ENCODE measurements at regions of chr4 and their contacts with region 1.

Region 1: GRCh38 chr4:38179690-38180377 is 219.6 kb downstream of the PTTG2 start:
- DNase-seq: peak; percentile 49 to 81 (median 62)
- H3K4me3 ChIP-seq: no peak overlapping the region
- H3K4me3 Mint-ChIP-seq: no peak overlapping the region
- H3K27ac ChIP-seq: no peak overlapping the region
- H3K27ac Mint-ChIP-seq: no peak overlapping the region
- H3K4me1 ChIP-seq: peaks cover 22% of the 10 kb centered on the region
- H3K4me1 Mint-ChIP-seq: peaks cover 29 to 50% (median 46%) of the 10 kb centered on the region in 3 donors
- H3K27me3 ChIP-seq: no peaks in the 10 kb centered on the region
- H3K27me3 Mint-ChIP-seq: peaks cover 0 to 2% of the 10 kb centered on the region in 2 donors

Region 2: DNA sequence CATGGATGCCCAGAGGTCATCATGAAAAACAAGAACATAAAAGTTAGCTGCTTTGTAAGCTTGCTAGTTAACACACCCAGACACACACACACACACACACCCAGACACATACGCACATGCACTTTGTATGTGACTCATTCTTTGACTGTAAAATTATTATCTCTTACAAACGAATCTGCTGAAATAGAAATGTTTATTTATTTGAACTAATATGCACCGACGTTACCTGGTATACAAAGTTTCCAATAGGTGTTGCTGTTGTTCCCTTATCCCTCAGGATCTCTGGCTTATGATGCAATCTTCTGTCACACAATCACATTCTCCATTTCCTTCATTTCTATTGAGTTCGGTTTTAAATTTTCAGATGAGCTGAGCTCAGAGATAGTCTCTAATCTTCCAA is 10.3 kb before region 1 on chr4:
- CTCF ChIA-PET with region 1: interaction called, 13 read pairs
- POLR2A ChIA-PET with region 1: no interaction called
- DNase-seq: no peak
- H3K4me3 ChIP-seq: no peak overlapping the region
- H3K4me3 Mint-ChIP-seq: no peak overlapping the region
- H3K27ac ChIP-seq: no peak overlapping the region
- H3K27ac Mint-ChIP-seq: no peak overlapping the region
- H3K4me1 ChIP-seq: no peaks in the 10 kb centered on the region
- H3K4me1 Mint-ChIP-seq: peaks cover 0 to 6% (median 0%) of the 10 kb centered on the region in 3 donors
- H3K27me3 ChIP-seq: no peaks in the 10 kb centered on the region
- H3K27me3 Mint-ChIP-seq: no peaks in the 10 kb centered on the region

Region 3: DNA sequence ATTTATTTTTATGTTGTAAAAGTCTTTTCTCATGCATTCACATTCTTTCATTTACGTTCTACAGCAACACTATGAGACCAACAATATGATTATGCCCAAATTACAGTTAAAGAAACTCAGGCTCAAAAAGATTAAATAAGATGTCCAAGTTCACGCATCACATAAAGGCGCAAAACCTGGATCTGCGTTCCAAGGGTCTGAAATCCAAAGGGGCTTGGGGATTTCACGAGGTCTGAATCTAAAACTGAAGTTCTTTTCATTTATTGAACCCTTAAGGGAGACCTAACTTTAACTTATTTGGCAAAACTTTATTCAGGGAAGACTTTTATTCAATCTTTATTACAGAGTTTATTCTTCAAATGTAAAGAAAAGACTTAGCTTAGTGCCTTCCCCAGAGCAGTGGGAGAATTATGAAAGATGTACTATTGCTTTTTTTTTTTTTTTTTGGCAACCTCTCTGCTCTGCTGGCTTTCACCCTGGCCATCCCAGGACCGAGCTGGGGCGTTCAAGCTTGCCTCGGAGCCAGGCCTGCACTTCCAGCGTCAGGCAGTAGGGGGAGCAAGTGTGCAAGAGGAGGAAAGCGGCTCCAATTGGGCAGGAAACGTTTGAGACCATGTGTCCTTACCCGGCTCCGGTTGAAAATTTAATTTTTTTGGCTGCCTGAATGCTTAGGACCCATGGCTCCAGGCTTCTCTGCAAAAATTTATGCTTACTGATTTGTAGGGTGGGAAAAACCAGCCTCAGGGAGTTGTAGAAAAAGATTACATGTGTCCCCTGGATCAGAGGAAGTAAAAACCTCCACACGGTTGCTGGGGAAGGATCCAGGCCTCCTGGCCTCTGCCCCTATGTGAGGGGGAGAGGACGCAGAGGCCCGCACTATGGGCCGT is 139.9 kb after region 1 on chr4:
- CTCF ChIA-PET with region 1: interaction called, 53 read pairs
- POLR2A ChIA-PET with region 1: interaction called, 6 read pairs
- DNase-seq: peak; percentile 75 to 90 (median 83)
- H3K4me3 ChIP-seq: peak overlapping the region; percentile 43
- H3K4me3 Mint-ChIP-seq: peak overlapping the region; percentile 81 to 94 (median 88)
- H3K27ac ChIP-seq: peak overlapping the region; percentile 20
- H3K27ac Mint-ChIP-seq: peak overlapping the region; percentile 80 to 97 (median 94)
- H3K4me1 ChIP-seq: peaks cover 44% of the 10 kb centered on the region
- H3K4me1 Mint-ChIP-seq: peaks cover 32 to 38% (median 35%) of the 10 kb centered on the region in 3 donors
- H3K27me3 ChIP-seq: no peaks in the 10 kb centered on the region
- H3K27me3 Mint-ChIP-seq: no peaks in the 10 kb centered on the region

Region 4: DNA sequence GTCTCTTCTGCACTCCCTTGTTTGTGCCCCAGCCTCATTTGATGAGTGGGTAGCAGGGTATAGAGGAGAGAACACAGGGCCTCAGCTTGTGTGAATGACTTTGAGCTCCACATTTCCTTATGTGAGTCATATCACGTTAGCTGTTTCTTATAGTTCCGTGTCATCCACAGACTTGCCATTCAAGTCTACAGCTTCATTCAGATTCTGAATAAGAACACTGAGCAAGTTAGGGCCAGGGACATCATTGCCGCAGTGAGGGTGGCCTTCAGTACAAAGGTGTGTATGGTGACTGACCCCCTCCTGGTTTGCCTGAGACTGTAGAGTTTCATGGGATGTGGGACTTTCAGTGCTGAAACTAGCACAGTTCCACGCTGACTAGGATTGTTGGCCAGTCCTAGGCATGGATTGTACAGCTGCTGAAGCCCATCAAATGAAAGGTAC is 507.8 kb after region 1 on chr4:
- CTCF ChIA-PET with region 1: interaction called, 10 read pairs
- POLR2A ChIA-PET with region 1: no interaction called
- DNase-seq: no peak
- H3K4me3 ChIP-seq: no peak overlapping the region
- H3K4me3 Mint-ChIP-seq: peak overlapping the region in 6 of 7 donors; percentile 20 to 53 (median 34)
- H3K27ac ChIP-seq: no peak overlapping the region
- H3K27ac Mint-ChIP-seq: peak overlapping the region; percentile 8 to 84 (median 71)
- H3K4me1 ChIP-seq: peaks cover 57% of the 10 kb centered on the region
- H3K4me1 Mint-ChIP-seq: peaks cover 61 to 76% (median 74%) of the 10 kb centered on the region in 3 donors
- H3K27me3 ChIP-seq: no peaks in the 10 kb centered on the region
- H3K27me3 Mint-ChIP-seq: no peaks in the 10 kb centered on the region

Region 5: DNA sequence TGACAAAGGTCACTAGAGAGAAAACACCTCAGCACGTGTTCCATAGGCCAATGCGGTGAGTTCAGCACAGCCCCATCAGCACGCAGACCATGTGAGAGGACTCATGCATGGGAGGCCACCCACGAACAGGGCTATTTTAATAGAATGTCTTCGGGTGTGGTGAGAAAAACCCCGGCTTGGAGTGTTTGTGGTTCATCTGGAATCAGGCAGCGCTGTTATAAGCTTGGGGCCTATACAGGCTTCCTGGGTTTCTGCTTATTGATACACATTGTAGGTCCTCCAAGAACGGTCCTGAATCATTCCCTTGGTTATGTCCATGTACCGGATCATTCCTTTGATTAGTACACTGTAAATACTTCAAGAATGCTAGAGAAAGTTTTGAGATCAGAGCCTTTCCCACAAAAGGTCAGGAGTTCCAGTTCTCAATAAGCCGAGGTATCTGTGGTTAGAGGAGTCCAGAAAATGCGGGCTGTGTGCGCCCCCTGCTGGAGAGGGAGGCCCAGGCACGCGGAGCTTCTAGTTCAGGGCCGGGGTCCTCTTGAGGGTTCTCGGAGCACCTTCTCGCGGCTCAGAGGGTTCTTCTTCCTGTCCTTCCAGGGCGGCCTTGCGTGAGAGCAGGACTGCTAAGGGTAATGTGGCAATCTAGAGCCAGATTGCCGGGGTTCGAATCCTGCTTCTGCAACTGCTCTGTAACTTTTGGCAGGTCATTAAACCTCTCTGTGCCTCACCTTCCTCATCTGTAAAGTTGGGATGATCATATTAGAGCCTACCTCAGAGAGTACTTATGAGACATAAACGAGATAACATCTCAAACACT is 551.2 kb after region 1 on chr4:
- CTCF ChIA-PET with region 1: interaction called, 170 read pairs
- POLR2A ChIA-PET with region 1: no interaction called
- DNase-seq: peak; percentile 70 to 87 (median 71)
- H3K4me3 ChIP-seq: no peak overlapping the region
- H3K4me3 Mint-ChIP-seq: peak overlapping the region in 5 of 7 donors; percentile 19 to 52 (median 46)
- H3K27ac ChIP-seq: no peak overlapping the region
- H3K27ac Mint-ChIP-seq: peak overlapping the region in 1 of 8 donors; percentile 65
- H3K4me1 ChIP-seq: peaks cover 10% of the 10 kb centered on the region
- H3K4me1 Mint-ChIP-seq: peaks cover 10 to 22% (median 19%) of the 10 kb centered on the region in 3 donors
- H3K27me3 ChIP-seq: no peaks in the 10 kb centered on the region
- H3K27me3 Mint-ChIP-seq: peaks cover 0 to 1% of the 10 kb centered on the region in 2 donors

Measured in CD8-positive, alpha-beta memory T cell (primary cell).